ENCODE measurements at regions of chr7 and their contacts with region 1.

Region 1: GRCh38 chr7:105055621-105056020 is 41.6 kb downstream of the KMT2E start:
- DNase-seq: no peak
- H3K4me3 ChIP-seq: no peak overlapping the region
- H3K27ac ChIP-seq: no peak overlapping the region
- H3K4me1 ChIP-seq: no peaks in the 10 kb centered on the region
- CTCF ChIP-seq: no peak

Region 2: DNA sequence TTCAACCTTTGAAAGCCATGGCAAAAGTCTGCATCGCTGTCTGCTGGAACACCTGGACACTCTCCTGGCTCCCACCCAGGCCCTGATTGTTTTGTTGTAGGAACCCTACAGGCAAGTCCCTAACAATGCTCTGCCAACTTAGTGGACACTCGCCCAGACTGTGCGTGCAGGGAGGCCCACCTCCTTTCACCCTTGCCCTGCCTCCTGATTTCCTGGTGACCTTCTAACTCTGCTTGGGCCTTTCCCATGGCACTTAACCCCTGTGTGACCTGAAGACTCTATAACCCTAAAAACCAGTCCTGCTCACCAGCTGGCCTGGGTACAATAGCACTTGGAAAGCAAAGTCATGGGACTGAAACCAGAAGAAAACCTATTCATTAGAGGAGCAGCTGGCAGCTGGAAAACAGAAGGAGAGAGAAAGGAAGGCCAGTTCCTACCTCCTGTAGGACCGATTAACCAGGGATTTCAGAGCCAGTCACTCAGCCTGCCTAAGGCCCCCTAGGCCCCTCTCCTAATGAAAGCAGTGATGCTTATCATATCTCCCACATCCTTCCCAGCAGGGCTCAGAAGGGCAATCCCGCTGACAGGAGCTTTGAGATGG is 124.3 kb before region 1 on chr7:
- CTCF ChIA-PET with region 1: no interaction called
- POLR2A ChIA-PET with region 1: no interaction called
- intact Hi-C with region 1: no loop called
- DNase-seq: no peak
- H3K4me3 ChIP-seq: no peak overlapping the region
- H3K27ac ChIP-seq: no peak overlapping the region
- H3K4me1 ChIP-seq: peaks cover 27% of the 10 kb centered on the region
- CTCF ChIP-seq: no peak

Region 3: GRCh38 chr7:105036217-105037168 is 19.1 kb before region 1 on chr7:
- CTCF ChIA-PET with region 1: no interaction called
- POLR2A ChIA-PET with region 1: interaction called, 3 read pairs
- intact Hi-C with region 1: loop called (anchors 1 kb)
- DNase-seq: no peak
- H3K4me3 ChIP-seq: no peak overlapping the region
- H3K27ac ChIP-seq: no peak overlapping the region
- H3K4me1 ChIP-seq: peaks cover 21% of the 10 kb centered on the region
- CTCF ChIP-seq: no peak

Region 4: DNA sequence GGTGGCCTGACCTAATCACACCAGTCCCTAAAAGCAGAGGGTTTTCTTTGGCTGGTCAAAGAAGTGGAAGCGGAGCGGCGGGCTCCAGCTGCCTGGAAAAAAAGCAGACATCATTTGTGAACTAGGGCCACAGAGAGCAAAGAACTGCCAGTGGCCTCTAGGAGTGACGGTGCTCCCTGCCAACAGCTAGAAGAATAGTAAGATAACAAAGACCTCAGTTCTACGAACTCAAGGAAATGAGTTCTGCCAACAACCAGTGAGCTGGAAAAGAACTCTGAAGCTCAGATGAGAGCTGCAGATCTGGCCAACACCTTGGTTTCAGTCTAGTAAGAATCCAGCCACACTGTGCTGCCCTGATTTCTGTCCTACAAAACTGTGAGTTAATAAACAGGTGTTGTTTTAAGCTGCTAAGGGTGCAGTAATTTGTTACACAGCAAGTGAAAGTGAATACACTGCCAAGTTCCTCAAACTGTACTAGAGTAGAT is 155.1 kb after region 1 on chr7:
- CTCF ChIA-PET with region 1: no interaction called
- POLR2A ChIA-PET with region 1: no interaction called
- intact Hi-C with region 1: no loop called
- DNase-seq: peak; percentile 18
- H3K4me3 ChIP-seq: no peak overlapping the region
- H3K27ac ChIP-seq: no peak overlapping the region
- H3K4me1 ChIP-seq: no peaks in the 10 kb centered on the region
- CTCF ChIP-seq: no peak